CD4-positive, alpha-beta memory T cell (primary cell): ENCODE measurements at regions of chr1 and their contacts with region 1.

Region 1: DNA sequence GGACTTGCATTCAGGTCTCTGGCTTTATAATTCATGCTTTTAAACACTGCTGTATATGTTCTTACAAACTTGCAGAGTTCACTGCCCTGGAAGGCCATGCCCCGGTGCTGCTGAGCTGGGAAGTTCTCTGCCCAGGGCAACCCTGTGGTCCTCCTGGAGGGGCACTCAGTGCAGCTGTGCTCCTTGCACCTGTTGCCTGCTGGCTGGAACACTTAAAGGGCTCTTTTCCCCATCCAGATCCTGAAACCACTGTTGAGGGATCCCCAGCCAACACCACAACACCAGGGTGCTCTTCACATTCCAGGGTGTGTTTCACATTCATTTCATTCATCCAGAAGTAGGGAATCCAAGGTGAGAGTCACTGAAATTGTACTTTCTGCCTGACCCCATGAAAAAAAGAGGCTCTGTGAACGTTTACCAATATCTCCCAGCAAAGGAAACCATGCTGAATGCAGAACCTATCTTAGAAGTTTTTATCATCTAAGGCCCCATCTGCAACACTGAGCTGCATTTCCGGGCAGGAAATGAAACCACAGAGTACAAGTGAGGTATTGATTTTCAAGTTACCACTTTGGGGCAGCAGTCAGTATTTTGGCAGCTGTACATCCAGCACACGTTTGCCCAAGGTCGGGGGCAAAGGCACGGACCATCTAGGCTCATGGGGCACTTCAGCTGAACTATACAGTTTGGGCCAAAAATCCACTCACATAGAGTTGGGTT is 16.4 kb upstream of the KIAA0040 start:
- DNase-seq: peak; percentile 76 to 83 (median 80)
- H3K4me3 ChIP-seq: peak overlapping the region in 1 of 2 donors; percentile 8
- H3K4me3 Mint-ChIP-seq: peak overlapping the region; percentile 80 to 93 (median 90)
- H3K27ac ChIP-seq: peak overlapping the region; percentile 55
- H3K27ac Mint-ChIP-seq: peak overlapping the region; percentile 90 to 98 (median 96)
- H3K4me1 ChIP-seq: peaks cover 73% of the 10 kb centered on the region
- H3K4me1 Mint-ChIP-seq: peaks cover 59 to 84% (median 71%) of the 10 kb centered on the region in 4 donors
- H3K27me3 ChIP-seq: no peaks in the 10 kb centered on the region
- H3K27me3 Mint-ChIP-seq: no peaks in the 10 kb centered on the region

Region 2: DNA sequence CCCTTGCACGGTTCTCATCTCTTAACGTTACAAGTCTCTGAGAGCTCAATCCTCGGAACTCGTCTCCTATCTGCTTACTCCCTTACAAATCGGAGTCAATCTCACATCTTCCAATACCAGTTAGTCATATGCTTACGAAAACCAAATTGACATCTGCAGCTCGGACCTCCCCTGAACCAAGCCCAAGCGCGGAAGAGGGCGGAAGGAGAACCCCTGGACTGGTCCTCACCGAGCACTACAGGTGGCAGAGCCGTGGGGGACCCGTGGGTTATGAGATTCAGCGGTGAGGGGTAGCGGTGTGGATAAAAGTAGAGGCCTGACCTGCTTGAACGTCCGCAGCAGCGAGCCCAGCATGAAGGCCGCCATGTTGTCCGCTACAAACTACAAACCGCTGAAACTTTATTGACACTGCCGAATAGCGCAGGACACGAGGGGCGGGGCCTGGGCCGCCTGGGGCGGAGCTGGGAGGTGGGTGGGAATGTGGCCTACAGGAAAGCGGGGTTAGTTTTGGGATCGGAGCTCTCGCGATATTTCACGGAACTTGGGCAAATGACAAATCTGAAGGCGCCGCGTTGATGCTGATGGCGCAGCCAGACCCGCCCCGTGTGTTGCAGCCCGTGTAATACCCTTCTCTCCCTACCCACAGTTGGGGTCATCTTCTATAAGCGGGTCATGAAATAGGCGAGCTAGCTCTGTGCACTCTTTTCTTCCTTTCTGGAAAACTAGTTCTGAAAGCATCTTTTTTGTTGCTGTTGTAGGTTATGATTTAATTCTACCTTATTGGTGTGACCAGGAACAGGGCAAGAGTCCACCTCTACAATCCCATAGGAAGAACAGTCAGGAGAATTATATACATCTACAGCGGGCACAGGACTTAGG is 185.7 kb before region 1 on chr1 and contains the start of gene MRPS14:
- CTCF ChIA-PET with region 1: no interaction called
- POLR2A ChIA-PET with region 1: interaction called, 10 read pairs
- intact Hi-C with region 1: no loop called
- DNase-seq: peak; percentile 95 to 98 (median 97)
- H3K4me3 ChIP-seq: peak within 1 kb of the TSS; percentile 79 to 97
- H3K4me3 Mint-ChIP-seq: peak within 1 kb of the TSS; percentile 90 to 98 (median 93)
- H3K27ac ChIP-seq: peak within 1 kb of the TSS; percentile 94
- H3K27ac Mint-ChIP-seq: peak within 1 kb of the TSS; percentile 86 to 97 (median 97)
- H3K4me1 ChIP-seq: peaks cover 25% of the 10 kb centered on the region
- H3K4me1 Mint-ChIP-seq: peaks cover 24 to 43% (median 28%) of the 10 kb centered on the region in 4 donors
- H3K27me3 ChIP-seq: no peaks in the 10 kb centered on the region
- H3K27me3 Mint-ChIP-seq: no peaks in the 10 kb centered on the region
- total RNA-seq, gene MRPS14: 39.3 to 40.6 TPM

Region 3: GRCh38 chr1:175174309-175175165 is 34.4 kb before region 1 on chr1:
- CTCF ChIA-PET with region 1: interaction called, 4 read pairs
- POLR2A ChIA-PET with region 1: interaction called, 9 read pairs
- intact Hi-C with region 1: loop called (anchors 5 kb)
- DNase-seq: peak in 3 of 5 donors; percentile 18 to 35 (median 22)
- H3K4me3 ChIP-seq: no peak overlapping the region
- H3K4me3 Mint-ChIP-seq: peak overlapping the region in 5 of 8 donors; percentile 8 to 65 (median 45)
- H3K27ac ChIP-seq: no peak overlapping the region
- H3K27ac Mint-ChIP-seq: peak overlapping the region; percentile 42 to 89 (median 84)
- H3K4me1 ChIP-seq: peaks cover 50% of the 10 kb centered on the region
- H3K4me1 Mint-ChIP-seq: peaks cover 60 to 87% (median 74%) of the 10 kb centered on the region in 4 donors
- H3K27me3 ChIP-seq: no peaks in the 10 kb centered on the region
- H3K27me3 Mint-ChIP-seq: no peaks in the 10 kb centered on the region

Region 4: GRCh38 chr1:175192630-175193526 is 16.1 kb before region 1 on chr1 and contains the start of gene KIAA0040:
- CTCF ChIA-PET with region 1: interaction called, 58 read pairs
- POLR2A ChIA-PET with region 1: interaction called, 112 read pairs
- intact Hi-C with region 1: loop called (anchors 1 kb)
- DNase-seq: peak; percentile 49 to 66 (median 51)
- H3K4me3 ChIP-seq: peak within 1 kb of the TSS; percentile 85 to 91
- H3K4me3 Mint-ChIP-seq: peak within 1 kb of the TSS; percentile 92 to 99 (median 98)
- H3K27ac ChIP-seq: peak within 1 kb of the TSS; percentile 75
- H3K27ac Mint-ChIP-seq: peak within 1 kb of the TSS; percentile 92 to 98 (median 96)
- H3K4me1 ChIP-seq: peaks cover 51% of the 10 kb centered on the region
- H3K4me1 Mint-ChIP-seq: peaks cover 39 to 76% (median 51%) of the 10 kb centered on the region in 4 donors
- H3K27me3 ChIP-seq: no peaks in the 10 kb centered on the region
- H3K27me3 Mint-ChIP-seq: no peaks in the 10 kb centered on the region
- total RNA-seq, gene KIAA0040: 28.7 to 33.6 TPM

Region 5: GRCh38 chr1:175297291-175297690 is 88.4 kb after region 1 on chr1:
- CTCF ChIA-PET with region 1: interaction called, 3 read pairs
- POLR2A ChIA-PET with region 1: no interaction called
- intact Hi-C with region 1: loop called (anchors 1 kb)
- DNase-seq: peak in 4 of 5 donors; percentile 41 to 57 (median 50)
- H3K4me3 ChIP-seq: no peak overlapping the region
- H3K4me3 Mint-ChIP-seq: peak overlapping the region in 2 of 8 donors; percentile 11 to 52
- H3K27ac ChIP-seq: no peak overlapping the region
- H3K27ac Mint-ChIP-seq: no peak overlapping the region
- H3K4me1 ChIP-seq: peaks cover 39% of the 10 kb centered on the region
- H3K4me1 Mint-ChIP-seq: peaks cover 23 to 46% (median 33%) of the 10 kb centered on the region in 4 donors
- H3K27me3 ChIP-seq: no peaks in the 10 kb centered on the region
- H3K27me3 Mint-ChIP-seq: peaks cover 4 to 8% of the 10 kb centered on the region in 2 donors

Region 6: GRCh38 chr1:176206961-176207902 is 998.3 kb after region 1 on chr1 and contains the start of gene COP1:
- CTCF ChIA-PET with region 1: no interaction called
- POLR2A ChIA-PET with region 1: no interaction called
- intact Hi-C with region 1: loop called (anchors 10 kb)
- DNase-seq: peak; percentile 96 to 98 (median 97)
- H3K4me3 ChIP-seq: peak within 1 kb of the TSS; percentile 64 to 95
- H3K4me3 Mint-ChIP-seq: peak within 1 kb of the TSS; percentile 98 to 100 (median 99)
- H3K27ac ChIP-seq: peak within 1 kb of the TSS; percentile 83
- H3K27ac Mint-ChIP-seq: peak within 1 kb of the TSS; percentile 98 to 99 (median 99)
- H3K4me1 ChIP-seq: peaks cover 45% of the 10 kb centered on the region
- H3K4me1 Mint-ChIP-seq: peaks cover 25 to 54% (median 40%) of the 10 kb centered on the region in 4 donors
- H3K27me3 ChIP-seq: no peaks in the 10 kb centered on the region
- H3K27me3 Mint-ChIP-seq: peaks cover 0 to 4% of the 10 kb centered on the region in 2 donors
- total RNA-seq, gene COP1: 44.6 to 45.1 TPM